ENCODE measurements at regions of chr19 and their contacts with region 1.

Region 1: DNA sequence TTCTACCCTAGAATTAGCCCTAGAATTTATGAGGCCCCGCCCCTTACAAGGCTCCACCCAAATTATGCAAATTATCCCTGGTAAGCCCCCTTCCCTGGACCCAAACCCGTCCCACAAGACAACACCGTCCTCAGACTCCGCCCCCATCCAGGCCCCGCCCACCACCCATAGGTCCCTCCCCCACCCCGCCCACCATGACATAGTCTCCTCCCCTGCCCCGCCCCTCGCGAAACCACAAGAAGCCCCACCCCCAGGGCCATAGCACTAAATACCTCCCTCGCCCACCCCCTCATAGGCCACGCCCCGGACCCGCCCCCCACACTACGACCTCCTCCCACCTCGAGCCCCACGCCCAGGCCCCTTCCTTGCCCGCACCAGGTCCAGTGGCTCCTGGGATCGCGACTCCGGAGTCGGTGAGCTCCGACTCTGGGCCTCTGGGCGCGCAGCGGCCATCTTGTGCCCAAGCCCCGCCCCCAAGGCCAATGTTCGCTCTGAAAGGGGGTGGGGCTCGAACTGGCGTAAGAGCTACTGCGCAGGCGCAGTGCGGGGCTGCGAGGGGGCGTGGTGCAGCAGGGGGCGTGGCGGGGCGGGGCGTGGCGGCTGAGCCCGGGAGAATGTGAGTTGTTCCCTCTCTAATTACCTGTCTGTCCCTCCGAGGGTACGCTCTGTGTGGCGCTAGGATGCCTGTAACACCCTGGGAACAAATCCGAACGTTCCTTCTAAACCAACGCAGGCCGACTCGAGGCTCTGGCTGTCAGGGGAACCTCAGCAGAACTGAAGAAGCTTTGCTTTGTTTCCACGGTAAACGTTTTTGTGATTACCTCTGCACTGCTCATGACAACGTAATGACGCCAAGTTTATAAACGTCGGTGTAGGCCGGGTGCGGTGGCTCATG is at the start of gene ZNF784:
- H3K4me3 ChIP-seq: peak within 1 kb of the TSS; percentile 88
- H3K27ac ChIP-seq: peak within 1 kb of the TSS; percentile 87
- H3K4me1 ChIP-seq: peaks cover 5% of the 10 kb centered on the region
- CTCF ChIP-seq: no peak

Region 2: GRCh38 chr19:55238030-55238429 is 386.3 kb before region 1 on chr19:
- CTCF ChIA-PET with region 1: interaction called, 10 read pairs
- POLR2A ChIA-PET with region 1: no interaction called
- H3K4me3 ChIP-seq: no peak overlapping the region
- H3K27ac ChIP-seq: no peak overlapping the region
- H3K4me1 ChIP-seq: no peaks in the 10 kb centered on the region
- CTCF ChIP-seq: no peak

Region 3: DNA sequence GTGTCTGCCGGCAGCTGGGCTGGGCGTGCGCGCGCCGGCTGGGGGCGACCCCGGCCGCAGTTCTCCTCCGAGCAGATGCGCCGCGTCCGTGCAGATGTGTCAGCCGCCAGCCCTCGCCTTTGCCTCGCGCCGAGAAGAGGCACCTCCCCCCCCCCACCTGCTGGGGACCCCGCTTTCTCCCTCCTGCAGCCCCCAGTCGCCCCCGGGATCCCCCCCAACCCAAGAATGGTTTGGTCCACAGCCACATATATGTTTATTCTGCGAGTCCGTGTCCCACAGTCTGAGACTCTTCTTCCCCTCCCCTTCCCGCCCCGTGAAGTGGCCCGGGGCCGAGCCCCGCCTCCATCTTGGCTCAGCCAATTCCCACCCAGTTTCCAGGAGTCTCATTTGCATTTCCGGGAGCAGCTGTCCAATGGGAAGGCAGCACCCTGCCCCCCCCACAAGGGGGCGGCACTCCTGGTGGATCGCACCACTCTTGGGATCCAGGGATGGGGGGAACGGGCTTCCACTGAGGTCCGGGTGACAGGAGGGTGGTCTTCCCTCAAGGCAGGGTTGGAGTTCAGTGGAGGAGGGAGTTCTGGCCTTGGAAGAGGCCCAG is 171.5 kb before region 1 on chr19:
- CTCF ChIA-PET with region 1: no interaction called
- POLR2A ChIA-PET with region 1: no interaction called
- H3K4me3 ChIP-seq: no peak overlapping the region
- H3K27ac ChIP-seq: no peak overlapping the region
- H3K4me1 ChIP-seq: no peaks in the 10 kb centered on the region
- CTCF ChIP-seq: no peak

Region 4: GRCh38 chr19:55643348-55644176 is 19.2 kb after region 1 on chr19 and contains the start of gene ZNF581:
- CTCF ChIA-PET with region 1: interaction called, 12 read pairs
- POLR2A ChIA-PET with region 1: interaction called, 8 read pairs
- H3K4me3 ChIP-seq: peak within 1 kb of the TSS; percentile 61
- H3K27ac ChIP-seq: peak within 1 kb of the TSS; percentile 83
- H3K4me1 ChIP-seq: peaks cover 27% of the 10 kb centered on the region
- CTCF ChIP-seq: no peak

Measured in HEK293 (cell line).